PC-9 (cell line): ENCODE measurements at regions of chr9 and their contacts with region 1.

Region 1: DNA sequence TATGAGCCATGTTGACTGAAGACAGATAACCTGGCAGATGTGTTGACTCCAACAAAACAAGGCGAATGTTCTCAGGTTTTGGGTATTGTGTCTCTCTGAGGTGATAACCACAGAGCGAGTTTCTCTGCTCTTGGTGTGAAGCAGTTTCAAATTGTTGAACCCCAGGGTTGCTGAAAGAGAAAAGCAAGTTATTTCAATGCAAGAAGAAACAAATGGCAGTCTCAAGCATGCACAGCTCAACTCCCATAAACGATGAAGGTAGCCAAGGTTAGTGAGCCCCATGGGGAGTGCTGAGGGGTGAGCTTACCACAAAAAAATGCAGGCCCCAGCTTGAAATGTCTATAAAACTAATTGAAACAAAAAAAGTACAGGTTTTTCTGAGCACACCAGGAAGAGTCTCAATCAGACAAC is 220.8 kb upstream of the DAPK1 start:
- DNase-seq: no peak
- H3K4me3 ChIP-seq: no peak overlapping the region
- H3K27ac ChIP-seq: no peak overlapping the region
- H3K4me1 ChIP-seq: no peaks in the 10 kb centered on the region
- H3K27me3 ChIP-seq: no peaks in the 10 kb centered on the region
- CTCF ChIP-seq: no peak

Region 2: GRCh38 chr9:86876797-86877196 is 400.1 kb before region 1 on chr9:
- CTCF ChIA-PET with region 1: interaction called, 17 read pairs
- POLR2A ChIA-PET with region 1: no interaction called
- intact Hi-C with region 1: no loop called
- DNase-seq: no peak
- H3K4me3 ChIP-seq: no peak overlapping the region
- H3K27ac ChIP-seq: no peak overlapping the region
- H3K4me1 ChIP-seq: no peaks in the 10 kb centered on the region
- H3K27me3 ChIP-seq: no peaks in the 10 kb centered on the region
- CTCF ChIP-seq: no peak

Region 3: DNA sequence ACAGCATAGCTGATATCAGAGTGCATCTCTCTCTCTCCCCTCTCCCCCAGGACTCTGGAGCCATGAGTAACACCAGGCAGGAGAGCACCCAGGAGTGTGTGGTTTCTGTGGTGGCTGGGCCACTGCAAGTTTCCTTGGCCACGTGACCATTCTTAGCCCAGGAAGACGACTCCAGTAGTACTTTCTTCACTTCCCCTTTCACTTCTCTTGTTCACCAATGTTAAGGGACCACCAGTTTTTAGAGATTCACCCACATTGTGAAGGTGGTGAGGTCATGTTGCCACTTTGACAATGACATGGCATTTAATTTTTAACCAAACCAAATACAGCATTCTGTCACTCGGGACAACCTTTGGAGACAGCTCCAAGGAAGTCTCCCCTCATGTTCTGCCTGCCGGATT is 202.9 kb after region 1 on chr9:
- CTCF ChIA-PET with region 1: no interaction called
- POLR2A ChIA-PET with region 1: no interaction called
- intact Hi-C with region 1: no loop called
- DNase-seq: no peak
- H3K4me3 ChIP-seq: no peak overlapping the region
- H3K27ac ChIP-seq: no peak overlapping the region
- H3K4me1 ChIP-seq: no peaks in the 10 kb centered on the region
- H3K27me3 ChIP-seq: no peaks in the 10 kb centered on the region
- CTCF ChIP-seq: no peak

Region 4: DNA sequence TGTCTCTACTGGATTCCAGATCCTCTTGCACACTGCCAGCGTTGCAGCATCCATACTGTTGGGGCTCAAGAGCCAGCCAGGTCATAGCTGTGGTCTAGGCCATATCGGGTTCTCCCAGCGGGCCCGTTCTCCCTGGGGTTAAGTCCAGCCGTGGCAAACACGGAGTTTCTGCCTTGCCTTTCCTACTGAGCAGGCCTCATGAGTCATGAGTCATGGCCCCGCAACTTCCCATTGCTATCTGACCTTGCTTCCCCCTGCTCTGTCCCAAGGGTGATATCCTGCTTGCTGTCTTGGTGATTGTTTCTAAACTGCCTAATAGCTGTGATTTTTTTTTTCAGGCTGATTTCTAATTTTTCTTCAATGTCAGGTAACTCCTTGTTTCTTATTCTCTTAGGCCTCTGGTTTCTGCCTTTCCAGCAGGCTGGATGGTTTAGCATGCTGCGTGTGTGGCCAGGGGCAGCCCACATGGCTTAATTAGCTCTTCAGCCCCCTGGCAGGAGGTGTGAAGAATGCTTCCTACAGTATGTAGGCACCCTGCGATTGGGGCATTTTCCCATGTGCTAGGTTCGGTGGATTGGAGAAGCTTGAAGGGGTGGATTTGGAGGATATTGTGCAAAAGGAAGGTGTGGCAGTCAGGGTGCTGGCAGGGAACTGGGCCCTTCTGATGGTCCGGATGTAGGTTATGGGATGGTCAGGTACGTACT is 239.5 kb after region 1 on chr9:
- CTCF ChIA-PET with region 1: no interaction called
- POLR2A ChIA-PET with region 1: interaction called, 20 read pairs
- intact Hi-C with region 1: no loop called
- DNase-seq: peak; percentile 57 to 75
- H3K4me3 ChIP-seq: no peak overlapping the region
- H3K27ac ChIP-seq: peak overlapping the region; percentile 39
- H3K4me1 ChIP-seq: peaks cover 27% of the 10 kb centered on the region
- H3K27me3 ChIP-seq: no peaks in the 10 kb centered on the region
- CTCF ChIP-seq: no peak